Esophagus muscularis mucosa (tissue), 4 donors: ENCODE measurements at regions of chr18 and their contacts with region 1.

Region 1: GRCh38 chr18:36067055-36067957 is at the start of gene RPRD1A:
- DNase-seq: peak; percentile 99
- H3K4me3 ChIP-seq: peak within 1 kb of the TSS; percentile 70 to 91 (median 74)
- H3K27ac ChIP-seq: peak within 1 kb of the TSS; percentile 87 to 94 (median 90)
- H3K4me1 ChIP-seq: peaks cover 13 to 36% (median 22%) of the 10 kb centered on the region in 4 donors
- H3K27me3 ChIP-seq: no peaks in the 10 kb centered on the region
- CTCF ChIP-seq: no peak
- EP300 ChIP-seq: no peak
- POLR2A ChIP-seq: peak; percentile 39
- total RNA-seq, gene RPRD1A: 62.9 to 86.8 (median 77.2) TPM

Region 2: DNA sequence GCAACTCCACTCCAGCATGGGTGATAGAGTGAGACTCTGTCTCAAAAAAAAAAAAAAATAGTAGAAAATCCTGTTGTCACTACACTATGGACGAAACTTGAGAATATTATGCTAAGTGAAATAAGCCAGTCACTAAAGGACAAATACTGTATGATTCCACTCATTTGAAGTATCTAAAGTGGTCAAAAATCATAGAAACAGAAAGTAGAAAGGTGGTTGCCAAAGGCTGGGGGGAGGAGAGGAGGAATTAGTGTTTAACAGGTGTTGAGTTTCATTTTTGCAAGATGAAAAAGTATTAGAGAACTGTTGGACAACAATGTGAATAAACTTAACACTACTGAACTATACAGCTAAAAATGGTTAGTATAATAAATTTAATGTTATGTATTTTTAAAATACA is 113.6 kb before region 1 on chr18:
- intact Hi-C with region 1: no loop called
- DNase-seq: no peak
- H3K4me3 ChIP-seq: no peak overlapping the region
- H3K27ac ChIP-seq: no peak overlapping the region
- H3K4me1 ChIP-seq: peaks cover 5 to 14% (median 11%) of the 10 kb centered on the region in 4 donors
- H3K27me3 ChIP-seq: peaks cover 0 to 3% (median 0%) of the 10 kb centered on the region in 4 donors
- CTCF ChIP-seq: no peak
- EP300 ChIP-seq: no peak
- POLR2A ChIP-seq: no peak

Region 3: GRCh38 chr18:35972197-35973052 is 94.9 kb before region 1 on chr18 and contains the start of gene RMP24:
- intact Hi-C with region 1: loop called (anchors 5 kb)
- DNase-seq: peak; percentile 98
- H3K4me3 ChIP-seq: peak within 1 kb of the TSS; percentile 75 to 94 (median 86)
- H3K27ac ChIP-seq: peak within 1 kb of the TSS; percentile 87 to 94 (median 92)
- H3K4me1 ChIP-seq: peaks cover 12 to 28% (median 26%) of the 10 kb centered on the region in 4 donors
- H3K27me3 ChIP-seq: no peaks in the 10 kb centered on the region
- CTCF ChIP-seq: no peak
- EP300 ChIP-seq: no peak
- POLR2A ChIP-seq: no peak

Region 4: GRCh38 chr18:36012891-36013290 is 54.4 kb before region 1 on chr18:
- intact Hi-C with region 1: no loop called
- DNase-seq: no peak
- H3K4me3 ChIP-seq: no peak overlapping the region
- H3K27ac ChIP-seq: no peak overlapping the region
- H3K4me1 ChIP-seq: peaks cover 0 to 7% (median 2%) of the 10 kb centered on the region in 4 donors
- H3K27me3 ChIP-seq: no peaks in the 10 kb centered on the region
- CTCF ChIP-seq: no peak
- EP300 ChIP-seq: no peak
- POLR2A ChIP-seq: no peak

Region 5: GRCh38 chr18:36129300-36130038 is 62.2 kb after region 1 on chr18 and contains the starts of genes ELP2 and SLC39A6:
- intact Hi-C with region 1: loop called (anchors 2 kb)
- DNase-seq: peak; percentile 98
- H3K4me3 ChIP-seq: peak within 1 kb of the TSS; percentile 80 to 93 (median 89)
- H3K27ac ChIP-seq: peak within 1 kb of the TSS; percentile 92 to 99 (median 95)
- H3K4me1 ChIP-seq: peaks cover 29 to 51% (median 38%) of the 10 kb centered on the region in 4 donors
- H3K27me3 ChIP-seq: no peaks in the 10 kb centered on the region
- CTCF ChIP-seq: no peak
- EP300 ChIP-seq: no peak
- POLR2A ChIP-seq: peak; percentile 54
- total RNA-seq, gene ELP2: 43.4 to 63.1 (median 48.2) TPM
- total RNA-seq, gene SLC39A6: 26.6 to 39.1 (median 33.5) TPM

Region 6: GRCh38 chr18:36255072-36255698 is 187.9 kb after region 1 on chr18:
- intact Hi-C with region 1: no loop called
- DNase-seq: peak; percentile 70
- H3K4me3 ChIP-seq: no peak overlapping the region
- H3K27ac ChIP-seq: no peak overlapping the region
- H3K4me1 ChIP-seq: no peaks in the 10 kb centered on the region
- H3K27me3 ChIP-seq: no peaks in the 10 kb centered on the region
- CTCF ChIP-seq: no peak
- EP300 ChIP-seq: no peak
- POLR2A ChIP-seq: no peak

Region 7: GRCh38 chr18:36392164-36392978 is 325.1 kb after region 1 on chr18:
- intact Hi-C with region 1: no loop called
- DNase-seq: no peak
- H3K4me3 ChIP-seq: no peak overlapping the region
- H3K27ac ChIP-seq: no peak overlapping the region
- H3K4me1 ChIP-seq: peaks cover 0 to 11% (median 0%) of the 10 kb centered on the region in 4 donors
- H3K27me3 ChIP-seq: no peaks in the 10 kb centered on the region
- CTCF ChIP-seq: no peak
- EP300 ChIP-seq: no peak
- POLR2A ChIP-seq: no peak